Activated B cell treated with CpG ODN at 0.5 μM for 24 hours (primary cell): ENCODE measurements at regions of chr3 and their contacts with region 1.

Region 1: DNA sequence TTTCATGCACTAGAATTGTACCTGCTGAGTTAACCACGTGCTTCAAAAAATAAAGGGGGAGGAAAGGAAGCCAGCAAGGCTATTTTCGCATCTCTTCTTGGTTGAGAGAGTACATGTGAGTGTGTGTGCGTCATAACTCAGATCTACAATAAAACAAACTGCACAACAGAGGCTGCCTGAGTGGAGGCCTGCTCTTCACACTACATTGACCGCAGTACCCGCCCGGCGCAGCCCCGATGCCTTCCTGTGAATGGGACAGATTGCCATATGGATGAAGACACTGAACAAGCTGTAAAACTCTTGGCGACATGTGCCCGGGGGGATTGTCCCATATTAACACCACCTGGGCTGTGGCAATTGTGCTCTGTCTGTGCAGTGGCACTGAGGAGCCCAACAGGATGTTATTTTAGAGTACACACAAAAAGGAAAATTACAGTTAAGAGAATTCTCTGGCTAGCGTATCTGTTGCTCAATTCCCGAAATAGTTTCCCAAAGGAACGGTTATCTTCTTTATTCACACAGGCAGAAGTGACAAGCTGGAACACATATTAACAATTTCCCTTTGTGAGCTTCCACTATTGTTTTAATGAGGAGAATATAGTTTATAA is 551.5 kb downstream of the FOXP1 start:
- DNase-seq: peak; percentile 55
- ATAC-seq: peak; percentile 93
- H3K4me3 Mint-ChIP-seq: peak overlapping the region; percentile 67
- H3K27ac Mint-ChIP-seq: peak overlapping the region; percentile 91
- H3K4me1 Mint-ChIP-seq: peaks cover 93% of the 10 kb centered on the region
- H3K27me3 Mint-ChIP-seq: no peaks in the 10 kb centered on the region
- CTCF ChIP-seq: no peak

Region 2: DNA sequence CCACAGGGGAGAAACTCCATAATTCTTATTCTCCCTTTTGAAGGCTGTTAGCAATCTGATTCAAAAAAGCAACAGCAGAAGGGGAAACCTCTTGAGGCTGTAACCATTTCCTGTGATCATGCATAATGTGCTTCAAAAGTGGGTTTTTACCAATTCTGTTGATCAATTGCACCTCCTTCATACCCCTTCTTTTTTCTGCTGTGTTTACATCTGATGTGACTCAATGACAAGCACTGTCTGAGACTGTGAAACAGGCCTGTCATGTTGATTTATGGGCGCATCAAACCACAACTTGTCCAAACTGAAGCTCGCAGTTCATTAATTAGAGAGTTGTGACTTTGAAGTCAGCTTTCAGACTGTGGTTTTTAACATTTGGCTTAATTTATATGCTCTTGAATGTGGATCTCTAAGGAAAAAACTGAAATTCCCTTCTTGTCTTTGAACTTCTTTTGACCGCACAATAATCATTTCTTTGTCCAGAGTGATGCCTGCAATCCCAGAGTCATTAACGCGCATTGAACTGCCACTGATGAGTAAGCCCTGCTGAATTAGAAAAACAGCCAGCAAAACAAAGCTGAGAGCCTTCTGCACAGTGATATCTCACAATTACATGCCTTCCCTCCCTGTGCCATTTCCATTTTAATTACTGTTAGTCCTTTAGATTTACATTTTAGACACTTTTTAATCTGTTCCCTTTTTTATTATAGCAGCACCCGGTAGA is 18.7 kb after region 1 on chr3:
- CTCF ChIA-PET with region 1: interaction called, 3 read pairs
- POLR2A ChIA-PET with region 1: interaction called, 15 read pairs
- intact Hi-C with region 1: loop called (anchors 2 kb)
- DNase-seq: no peak
- ATAC-seq: no peak
- H3K4me3 Mint-ChIP-seq: peak overlapping the region; percentile 44
- H3K27ac Mint-ChIP-seq: peak overlapping the region; percentile 72
- H3K4me1 Mint-ChIP-seq: peaks cover 100% of the 10 kb centered on the region
- H3K27me3 Mint-ChIP-seq: no peaks in the 10 kb centered on the region
- CTCF ChIP-seq: no peak

Region 3: GRCh38 chr3:71237672-71238071 is 205.7 kb after region 1 on chr3:
- CTCF ChIA-PET with region 1: no interaction called
- POLR2A ChIA-PET with region 1: interaction called, 14 read pairs
- intact Hi-C with region 1: no loop called
- DNase-seq: no peak
- ATAC-seq: no peak
- H3K4me3 Mint-ChIP-seq: no peak overlapping the region
- H3K27ac Mint-ChIP-seq: peak overlapping the region; percentile 42
- H3K4me1 Mint-ChIP-seq: peaks cover 61% of the 10 kb centered on the region
- H3K27me3 Mint-ChIP-seq: no peaks in the 10 kb centered on the region
- CTCF ChIP-seq: no peak